H1 (cell line): ENCODE measurements at regions of chr5 and their contacts with region 1.

Region 1: GRCh38 chr5:83712001-83712601 is 8.6 kb downstream of the HAPLN1 start:
- DNase-seq: peak in 1 of 2 experiments; percentile 64
- H3K4me3 ChIP-seq: no peak overlapping the region
- H3K27ac ChIP-seq: no peak overlapping the region
- H3K4me1 ChIP-seq: peaks cover 0 to 7% (median 2%) of the 10 kb centered on the region in 4 experiments; a peak in 2 of 7 replicates
- H3K27me3 ChIP-seq: no peaks in the 10 kb centered on the region
- CTCF ChIP-seq: peak in 2 of 3 experiments; percentile 21 to 50; a peak in 2 of 4 replicates
- EP300 ChIP-seq: no peak
- POLR2A ChIP-seq: no peak
- RAD21 ChIP-seq: peak; percentile 69 to 74

Region 2: DNA sequence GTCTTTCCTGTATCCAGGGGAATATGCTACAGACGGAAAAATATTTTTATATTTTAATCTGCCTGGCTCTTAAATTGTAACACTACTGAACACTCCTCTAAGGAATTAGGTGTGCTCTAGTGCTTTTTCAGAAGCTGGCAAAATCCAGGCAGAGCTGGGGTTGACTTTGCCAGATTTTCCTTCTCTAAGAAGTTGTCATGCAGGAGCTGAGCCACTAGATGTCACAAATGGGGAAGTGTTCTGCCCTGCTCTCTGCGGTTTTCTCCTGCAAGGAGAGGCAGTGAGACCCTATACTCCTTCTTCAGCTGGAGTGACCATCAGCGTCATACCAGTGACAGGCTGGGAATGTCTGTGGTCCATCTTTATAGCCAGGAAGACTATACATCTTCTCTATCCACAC is 104.0 kb before region 1 on chr5:
- CTCF ChIA-PET with region 1: interaction called, 20 read pairs
- POLR2A ChIA-PET with region 1: no interaction called
- DNase-seq: peak; percentile 31 to 62
- H3K4me3 ChIP-seq: no peak overlapping the region
- H3K27ac ChIP-seq: no peak overlapping the region
- H3K4me1 ChIP-seq: peaks cover 0 to 3% (median 0%) of the 10 kb centered on the region in 4 experiments; a peak in 2 of 7 replicates
- H3K27me3 ChIP-seq: no peaks in the 10 kb centered on the region
- CTCF ChIP-seq: peak; percentile 43 to 81 (median 75)
- EP300 ChIP-seq: no peak
- POLR2A ChIP-seq: no peak
- RAD21 ChIP-seq: peak; percentile 79 to 88

Region 3: DNA sequence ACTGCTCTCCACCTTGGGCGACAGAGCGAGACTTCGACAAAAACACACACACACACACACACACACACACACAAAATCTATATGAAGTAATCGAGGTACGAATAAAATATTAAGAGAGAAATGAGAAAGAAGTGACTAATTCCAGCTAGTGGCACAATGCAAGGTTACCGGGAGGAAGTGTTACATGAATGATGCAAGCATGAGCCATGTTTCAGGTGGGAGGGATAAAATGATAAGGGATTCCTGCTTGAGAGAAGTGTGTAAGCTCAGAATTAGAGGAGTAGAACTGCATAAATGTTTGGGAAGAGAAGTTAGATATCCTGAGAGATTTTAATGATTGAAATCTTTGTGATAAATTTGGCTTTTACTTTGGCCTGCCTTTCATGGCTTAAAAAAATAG is 10.2 kb before region 1 on chr5:
- CTCF ChIA-PET with region 1: interaction called, 17 read pairs
- POLR2A ChIA-PET with region 1: no interaction called
- DNase-seq: no peak
- H3K4me3 ChIP-seq: no peak overlapping the region
- H3K27ac ChIP-seq: no peak overlapping the region
- H3K4me1 ChIP-seq: no peaks in the 10 kb centered on the region
- H3K27me3 ChIP-seq: no peaks in the 10 kb centered on the region
- CTCF ChIP-seq: no peak
- EP300 ChIP-seq: no peak
- POLR2A ChIP-seq: no peak
- RAD21 ChIP-seq: no peak

Region 4: DNA sequence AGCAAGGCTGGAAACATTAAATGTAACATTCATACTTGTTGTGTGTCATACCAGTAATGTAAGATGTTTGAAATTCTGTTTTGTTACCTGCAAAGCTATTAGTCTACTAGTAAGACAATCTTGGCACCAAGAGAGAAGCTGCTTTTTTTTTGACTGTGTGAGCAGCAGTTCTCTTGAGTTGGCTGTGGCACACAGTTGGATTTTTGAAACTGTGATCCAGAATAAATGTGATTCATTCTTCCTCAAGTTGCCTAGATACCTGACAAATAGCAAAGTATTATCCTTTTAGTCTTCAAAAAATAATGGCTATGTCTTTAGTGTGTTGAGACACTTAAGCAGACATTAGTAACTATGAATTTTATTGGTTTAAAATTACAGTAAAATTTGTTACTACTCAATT is 65.8 kb after region 1 on chr5:
- CTCF ChIA-PET with region 1: no interaction called
- POLR2A ChIA-PET with region 1: no interaction called
- DNase-seq: no peak
- H3K4me3 ChIP-seq: no peak overlapping the region
- H3K27ac ChIP-seq: no peak overlapping the region
- H3K4me1 ChIP-seq: no peaks in the 10 kb centered on the region
- H3K27me3 ChIP-seq: peaks cover 0 to 2% (median 0%) of the 10 kb centered on the region in 4 experiments; a peak in 1 of 7 replicates
- CTCF ChIP-seq: no peak
- EP300 ChIP-seq: no peak
- POLR2A ChIP-seq: no peak
- RAD21 ChIP-seq: no peak